AG04449 (cell line): ENCODE measurements at regions of chr2 and their contacts with region 1.

Region 1: GRCh38 chr2:96554293-96555145 is 18.0 kb downstream of the ARID5A start:
- DNase-seq: no peak
- H3K4me3 ChIP-seq: no peak overlapping the region
- CTCF ChIP-seq: peak; percentile 96

Region 2: GRCh38 chr2:96536445-96537065 is 18.0 kb before region 1 on chr2 and contains the start of gene ARID5A:
- CTCF ChIA-PET with region 1: interaction called, 257 read pairs
- POLR2A ChIA-PET with region 1: no interaction called
- DNase-seq: no peak
- H3K4me3 ChIP-seq: peak within 1 kb of the TSS; percentile 70
- CTCF ChIP-seq: peak; percentile 18

Region 3: GRCh38 chr2:96565111-96565510 is 10.6 kb after region 1 on chr2:
- CTCF ChIA-PET with region 1: interaction called, 60 read pairs
- POLR2A ChIA-PET with region 1: no interaction called
- DNase-seq: no peak
- H3K4me3 ChIP-seq: no peak overlapping the region
- CTCF ChIP-seq: no peak